B cell (primary cell): ENCODE measurements at regions of chr16 and their contacts with region 1.

Region 1: DNA sequence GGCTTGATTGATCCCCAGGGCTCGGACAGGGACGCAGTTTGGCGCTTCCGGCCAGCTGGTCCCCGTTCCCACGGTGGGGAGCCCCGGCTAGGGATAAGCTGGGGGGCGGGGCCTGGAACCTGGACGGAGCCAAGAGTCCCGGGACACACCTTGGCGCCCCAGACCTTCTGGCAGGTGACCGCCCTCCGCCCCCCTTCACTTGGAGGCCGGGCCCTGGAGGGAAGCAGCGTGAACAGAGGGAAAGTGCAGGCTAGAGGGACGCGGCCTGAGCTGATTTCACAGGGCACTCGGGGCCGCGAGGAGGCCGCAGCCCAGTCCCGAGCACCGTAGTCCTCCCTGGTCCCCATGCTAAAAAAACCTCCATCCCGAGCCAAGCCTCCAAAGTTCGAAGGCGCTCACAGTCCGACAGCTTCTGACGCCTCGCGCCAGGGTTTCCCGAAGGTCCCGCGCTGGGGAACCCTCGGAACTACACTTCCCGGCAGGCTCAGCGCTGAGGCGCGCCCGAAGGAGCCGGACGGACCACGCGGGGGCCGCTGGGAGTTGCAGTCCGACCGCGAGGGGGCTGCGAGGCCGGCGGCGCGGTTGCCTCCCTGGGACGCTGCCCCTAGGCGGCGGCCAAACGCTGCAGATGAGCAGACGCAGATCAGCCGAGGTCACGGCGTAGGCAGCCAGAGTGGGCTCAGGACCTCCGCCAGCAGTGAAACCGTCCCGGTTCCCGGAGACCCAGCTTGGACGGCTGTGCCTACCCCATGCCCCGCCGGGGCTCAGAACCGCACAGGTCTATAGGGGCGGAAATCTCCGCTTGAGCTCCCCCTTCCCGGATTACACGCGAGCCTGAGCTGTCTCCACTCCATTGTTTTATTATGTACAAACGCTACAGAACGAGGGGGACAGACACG is at the start of gene TBX6:
- DNase-seq: peak; percentile 95
- ATAC-seq: peak; percentile 74
- H3K4me3 ChIP-seq: peak within 1 kb of the TSS; percentile 52 to 77 (median 70)
- H3K4me3 Mint-ChIP-seq: peak within 1 kb of the TSS; percentile 92
- H3K27ac ChIP-seq: peak within 1 kb of the TSS; percentile 87 to 92
- H3K27ac Mint-ChIP-seq: peak within 1 kb of the TSS; percentile 98
- H3K4me1 ChIP-seq: peaks cover 33 to 62% of the 10 kb centered on the region in 2 donors
- H3K4me1 Mint-ChIP-seq: peaks cover 53% of the 10 kb centered on the region
- H3K27me3 ChIP-seq: no peaks in the 10 kb centered on the region
- H3K27me3 Mint-ChIP-seq: no peaks in the 10 kb centered on the region
- CTCF ChIP-seq: peak; percentile 76
- total RNA-seq, gene TBX6: 5.4 and 6.1 TPM in 2 replicates

Region 2: DNA sequence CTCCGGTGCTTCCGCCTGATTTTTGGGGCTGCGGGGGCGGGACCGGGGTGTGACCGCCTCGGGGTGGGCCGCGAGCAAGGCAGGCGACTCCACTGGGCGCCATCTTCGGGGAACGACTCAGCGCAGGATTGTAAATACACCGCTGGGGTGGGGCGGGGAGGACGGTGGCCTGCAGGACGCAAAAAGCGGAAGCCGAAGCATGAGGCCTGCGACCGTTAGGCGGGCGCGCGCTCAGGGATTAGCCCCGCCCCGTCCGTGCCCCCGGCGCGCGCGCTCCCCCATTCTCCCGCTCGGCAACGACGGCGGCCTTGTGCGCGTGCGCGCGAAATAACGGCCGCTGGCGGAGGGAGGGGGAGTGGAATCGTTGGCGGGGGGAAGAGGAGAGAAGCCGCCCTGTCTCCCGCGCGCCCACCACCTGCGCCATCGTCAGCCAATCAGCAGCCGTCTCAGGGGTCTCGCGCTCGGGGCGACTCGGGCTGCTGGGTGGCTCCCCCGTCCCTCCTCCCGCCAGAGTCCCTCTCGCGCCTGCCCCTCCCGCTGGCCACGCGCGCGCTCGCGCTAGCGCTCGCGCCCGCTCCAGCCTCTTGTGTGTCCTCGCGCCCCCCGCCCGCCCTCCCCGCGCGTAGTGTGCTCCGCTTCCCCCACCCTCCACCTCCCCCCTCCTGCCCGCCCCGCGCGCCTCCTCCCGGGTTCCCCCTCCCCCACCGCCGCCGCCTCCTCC is 286.2 kb before region 1 on chr16:
- CTCF ChIA-PET with region 1: no interaction called
- POLR2A ChIA-PET with region 1: no interaction called
- intact Hi-C with region 1: no loop called
- DNase-seq: peak; percentile 99
- ATAC-seq: peak; percentile 69
- H3K4me3 ChIP-seq: peak overlapping the region; percentile 63 to 95 (median 89)
- H3K4me3 Mint-ChIP-seq: peak overlapping the region; percentile 98
- H3K27ac ChIP-seq: peak overlapping the region; percentile 87 to 91
- H3K27ac Mint-ChIP-seq: peak overlapping the region; percentile 100
- H3K4me1 ChIP-seq: peaks cover 43 to 48% of the 10 kb centered on the region in 2 donors
- H3K4me1 Mint-ChIP-seq: peaks cover 44% of the 10 kb centered on the region
- H3K27me3 ChIP-seq: no peaks in the 10 kb centered on the region
- H3K27me3 Mint-ChIP-seq: no peaks in the 10 kb centered on the region
- CTCF ChIP-seq: peak; percentile 13

Region 3: GRCh38 chr16:30052671-30053372 is 38.9 kb before region 1 on chr16:
- CTCF ChIA-PET with region 1: interaction called, 4 read pairs
- POLR2A ChIA-PET with region 1: interaction called, 6 read pairs
- intact Hi-C with region 1: loop called (anchors 1 kb)
- DNase-seq: peak; percentile 92
- ATAC-seq: peak; percentile 87
- H3K4me3 ChIP-seq: peak overlapping the region; percentile 9 to 70 (median 63)
- H3K4me3 Mint-ChIP-seq: peak overlapping the region; percentile 87
- H3K27ac ChIP-seq: peak overlapping the region in 1 of 2 donors; percentile 5
- H3K27ac Mint-ChIP-seq: peak overlapping the region; percentile 82
- H3K4me1 ChIP-seq: peaks cover 5 to 12% of the 10 kb centered on the region in 2 donors
- H3K4me1 Mint-ChIP-seq: peaks cover 13% of the 10 kb centered on the region
- H3K27me3 ChIP-seq: peaks cover 0 to 3% (median 0%) of the 10 kb centered on the region in 4 experiments
- H3K27me3 Mint-ChIP-seq: no peaks in the 10 kb centered on the region
- CTCF ChIP-seq: no peak

Region 4: DNA sequence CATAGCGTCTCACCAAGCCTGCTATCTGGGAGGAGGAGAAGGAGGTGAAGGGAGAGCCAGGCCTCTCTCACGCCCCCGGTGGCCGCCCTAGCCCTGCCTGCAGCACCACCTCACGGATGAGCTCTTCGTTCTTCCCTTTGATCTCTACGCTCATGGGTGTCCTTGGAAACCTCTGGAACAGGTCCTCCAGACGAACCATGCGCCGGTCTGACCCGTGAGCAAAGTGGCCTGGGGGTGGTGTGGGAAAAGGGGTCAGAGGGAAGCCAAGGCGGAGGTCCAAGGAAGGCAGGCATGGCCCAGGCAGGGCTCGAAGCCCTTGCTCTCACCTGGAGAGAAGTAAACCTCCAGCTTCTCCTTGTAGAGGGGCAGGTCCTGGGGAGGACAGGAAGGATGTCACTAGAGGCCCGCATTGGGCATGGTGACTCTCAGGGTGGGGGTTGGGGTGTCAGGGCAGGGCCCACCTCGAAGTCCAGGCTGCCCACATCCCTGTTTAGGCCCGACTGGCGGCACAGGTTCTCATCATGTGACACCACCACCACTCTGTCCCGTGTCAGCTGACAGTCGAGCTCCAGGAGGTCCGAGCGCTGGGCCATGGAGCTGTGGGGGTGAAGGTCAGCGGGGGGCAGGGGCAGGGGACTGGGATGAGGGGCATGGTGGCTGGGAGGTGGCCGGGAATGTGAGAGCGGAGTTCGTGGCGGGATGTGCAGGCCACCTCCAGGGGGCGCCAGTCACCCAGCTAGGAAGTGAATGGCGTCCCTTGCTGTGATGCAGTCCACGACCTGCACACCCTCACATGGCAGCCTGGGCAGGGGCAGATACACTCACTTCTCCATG is 20.7 kb after region 1 on chr16:
- CTCF ChIA-PET with region 1: interaction called, 27 read pairs
- POLR2A ChIA-PET with region 1: interaction called, 3 read pairs
- intact Hi-C with region 1: no loop called
- DNase-seq: peak; percentile 59
- ATAC-seq: peak; percentile 47
- H3K4me3 ChIP-seq: no peak overlapping the region
- H3K4me3 Mint-ChIP-seq: no peak overlapping the region
- H3K27ac ChIP-seq: no peak overlapping the region
- H3K27ac Mint-ChIP-seq: no peak overlapping the region
- H3K4me1 ChIP-seq: peaks cover 0 to 5% of the 10 kb centered on the region in 2 donors
- H3K4me1 Mint-ChIP-seq: peaks cover 4% of the 10 kb centered on the region
- H3K27me3 ChIP-seq: no peaks in the 10 kb centered on the region
- H3K27me3 Mint-ChIP-seq: no peaks in the 10 kb centered on the region
- CTCF ChIP-seq: peak; percentile 43

Region 5: GRCh38 chr16:30166202-30166902 is 74.6 kb after region 1 on chr16:
- CTCF ChIA-PET with region 1: no interaction called
- POLR2A ChIA-PET with region 1: no interaction called
- intact Hi-C with region 1: loop called (anchors 1 kb)
- DNase-seq: peak; percentile 80
- ATAC-seq: peak; percentile 93
- H3K4me3 ChIP-seq: peak overlapping the region in 4 of 5 experiments; percentile 0 to 47 (median 31)
- H3K4me3 Mint-ChIP-seq: peak overlapping the region; percentile 70
- H3K27ac ChIP-seq: peak overlapping the region; percentile 18 to 41
- H3K27ac Mint-ChIP-seq: peak overlapping the region; percentile 94
- H3K4me1 ChIP-seq: peaks cover 21 to 28% of the 10 kb centered on the region in 2 donors
- H3K4me1 Mint-ChIP-seq: peaks cover 25% of the 10 kb centered on the region
- H3K27me3 ChIP-seq: no peaks in the 10 kb centered on the region
- H3K27me3 Mint-ChIP-seq: no peaks in the 10 kb centered on the region
- CTCF ChIP-seq: no peak

Region 6: DNA sequence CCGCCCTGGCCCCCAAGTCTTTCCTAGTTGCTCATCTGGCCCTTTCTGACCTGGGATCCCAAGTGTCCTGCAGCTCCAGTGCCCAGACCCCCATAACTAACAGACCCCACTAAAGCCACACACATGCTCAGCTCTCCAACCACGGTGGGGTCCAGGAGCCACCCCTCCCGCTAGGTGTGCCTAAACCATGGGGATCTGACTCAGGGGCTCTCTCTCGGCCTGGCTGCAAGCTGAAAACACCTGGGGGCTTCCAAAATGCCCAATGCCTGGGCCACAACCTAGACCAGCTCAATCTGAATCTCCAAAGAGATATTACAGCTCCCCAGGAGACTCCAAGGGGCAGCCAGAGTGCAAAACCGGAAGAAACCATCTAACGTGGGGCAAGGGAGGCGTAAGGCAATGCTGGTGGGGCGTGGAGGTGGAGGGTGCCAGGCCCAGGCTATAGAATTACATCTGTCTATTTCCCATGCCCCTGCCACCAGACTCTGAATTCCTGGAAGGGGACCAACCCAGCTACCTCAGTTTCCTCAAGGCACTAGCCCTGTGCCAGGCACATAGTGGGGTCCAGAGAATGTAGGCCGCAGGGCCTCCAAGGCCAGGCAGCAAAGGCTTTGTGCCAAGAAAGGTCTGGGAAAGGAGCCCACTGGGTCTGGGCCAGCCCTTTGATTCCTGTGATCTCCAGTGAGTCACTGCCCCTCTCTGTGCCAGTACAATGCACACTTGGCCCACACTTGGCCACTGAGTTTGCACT is 260.0 kb after region 1 on chr16:
- CTCF ChIA-PET with region 1: no interaction called
- POLR2A ChIA-PET with region 1: no interaction called
- intact Hi-C with region 1: no loop called
- DNase-seq: peak; percentile 8
- ATAC-seq: no peak
- H3K4me3 ChIP-seq: no peak overlapping the region
- H3K4me3 Mint-ChIP-seq: peak overlapping the region; percentile 53
- H3K27ac ChIP-seq: no peak overlapping the region
- H3K27ac Mint-ChIP-seq: no peak overlapping the region
- H3K4me1 ChIP-seq: peaks cover 36 to 59% of the 10 kb centered on the region in 2 donors
- H3K4me1 Mint-ChIP-seq: peaks cover 58% of the 10 kb centered on the region
- H3K27me3 ChIP-seq: no peaks in the 10 kb centered on the region
- H3K27me3 Mint-ChIP-seq: no peaks in the 10 kb centered on the region
- CTCF ChIP-seq: no peak

Region 7: GRCh38 chr16:30407102-30407803 is 315.5 kb after region 1 on chr16 and contains the start of gene ZNF771:
- CTCF ChIA-PET with region 1: interaction called, 17 read pairs
- POLR2A ChIA-PET with region 1: interaction called, 5 read pairs
- intact Hi-C with region 1: no loop called
- DNase-seq: peak; percentile 94
- ATAC-seq: peak; percentile 91
- H3K4me3 ChIP-seq: peak within 1 kb of the TSS; percentile 42 to 76 (median 66)
- H3K4me3 Mint-ChIP-seq: peak within 1 kb of the TSS; percentile 98
- H3K27ac ChIP-seq: peak within 1 kb of the TSS; percentile 42 to 57
- H3K27ac Mint-ChIP-seq: peak within 1 kb of the TSS; percentile 96
- H3K4me1 ChIP-seq: peaks cover 15 to 23% of the 10 kb centered on the region in 2 donors
- H3K4me1 Mint-ChIP-seq: peaks cover 21% of the 10 kb centered on the region
- H3K27me3 ChIP-seq: no peaks in the 10 kb centered on the region
- H3K27me3 Mint-ChIP-seq: peaks cover 3% of the 10 kb centered on the region
- CTCF ChIP-seq: no peak
- total RNA-seq, gene ZNF771: 6.6 and 8.3 TPM in 2 replicates